PC-9 (cell line): ENCODE measurements at regions of chr3 and their contacts with region 1.

Region 1: DNA sequence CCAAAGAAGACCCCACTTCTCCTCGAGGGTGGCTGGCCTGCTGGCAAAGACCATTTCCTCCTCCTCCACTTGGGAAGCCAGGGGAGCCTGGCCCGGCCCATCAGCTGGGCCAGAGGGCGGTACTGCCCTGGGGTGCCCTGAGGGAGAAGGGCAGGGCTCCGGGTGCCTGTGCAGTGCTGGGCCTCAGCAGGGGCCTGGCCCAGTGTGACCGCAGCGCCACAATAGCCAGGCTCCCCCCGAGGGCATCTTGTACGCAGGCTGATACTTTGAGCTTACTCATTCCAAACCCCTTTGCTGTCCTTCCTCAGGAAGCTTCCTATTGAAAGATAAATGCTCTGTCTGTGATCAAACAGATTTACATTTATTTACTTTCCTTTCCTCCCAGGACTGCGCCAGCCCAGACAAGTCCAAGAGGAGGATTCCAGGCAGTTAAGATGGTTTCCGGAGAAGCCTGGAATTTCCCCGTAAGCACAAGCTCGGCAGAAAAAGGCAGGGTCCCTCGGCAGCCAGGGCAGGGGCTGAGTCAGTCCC is 240.1 kb downstream of the XXYLT1 start:
- DNase-seq: peak; percentile 98
- H3K4me3 ChIP-seq: peak overlapping the region; percentile 28; the same call in 1 of the 2 replicates
- H3K27ac ChIP-seq: peak overlapping the region; percentile 83
- H3K4me1 ChIP-seq: peaks cover 53% of the 10 kb centered on the region
- H3K27me3 ChIP-seq: no peaks in the 10 kb centered on the region
- CTCF ChIP-seq: no peak

Region 2: DNA sequence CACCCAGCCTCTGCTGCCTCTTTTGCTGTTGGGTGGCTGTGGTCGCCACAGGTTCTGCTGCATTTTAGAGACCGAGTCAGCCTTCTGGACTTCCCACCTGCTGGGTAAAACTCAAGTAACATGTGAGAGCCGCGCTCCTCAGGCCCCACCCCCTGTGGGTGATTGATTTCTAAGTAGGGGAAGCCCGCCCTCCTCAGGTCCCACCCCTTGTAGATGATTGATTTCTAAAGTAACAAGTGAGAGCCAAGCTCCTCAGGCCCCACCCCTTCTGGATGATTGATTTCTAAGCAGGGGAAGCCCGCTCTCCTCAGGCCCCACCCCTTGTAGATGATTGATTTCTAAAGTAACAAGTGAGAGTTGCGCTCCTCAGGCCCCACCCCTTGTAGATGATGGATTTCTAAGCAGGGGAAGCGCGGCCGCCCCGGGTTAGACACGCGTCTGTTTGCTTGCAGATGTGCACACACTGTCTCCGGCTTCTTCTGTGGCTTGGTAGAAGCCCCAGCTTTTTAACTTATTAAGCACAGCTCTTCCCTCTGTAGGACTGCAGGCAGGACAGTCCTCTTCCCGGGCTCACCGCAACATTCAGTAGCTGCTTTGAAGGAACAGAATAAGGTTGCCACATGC is 261.7 kb before region 1 on chr3:
- CTCF ChIA-PET with region 1: no interaction called
- POLR2A ChIA-PET with region 1: interaction called, 16 read pairs
- intact Hi-C with region 1: no loop called
- DNase-seq: peak; percentile 96 to 97
- H3K4me3 ChIP-seq: peak overlapping the region; percentile 50; the same call in 1 of the 2 replicates
- H3K27ac ChIP-seq: no peak overlapping the region
- H3K4me1 ChIP-seq: peaks cover 26% of the 10 kb centered on the region
- H3K27me3 ChIP-seq: no peaks in the 10 kb centered on the region
- CTCF ChIP-seq: 0 out of 2 replicates have a peak, but pooled peaks have one; percentile 28

Region 3: DNA sequence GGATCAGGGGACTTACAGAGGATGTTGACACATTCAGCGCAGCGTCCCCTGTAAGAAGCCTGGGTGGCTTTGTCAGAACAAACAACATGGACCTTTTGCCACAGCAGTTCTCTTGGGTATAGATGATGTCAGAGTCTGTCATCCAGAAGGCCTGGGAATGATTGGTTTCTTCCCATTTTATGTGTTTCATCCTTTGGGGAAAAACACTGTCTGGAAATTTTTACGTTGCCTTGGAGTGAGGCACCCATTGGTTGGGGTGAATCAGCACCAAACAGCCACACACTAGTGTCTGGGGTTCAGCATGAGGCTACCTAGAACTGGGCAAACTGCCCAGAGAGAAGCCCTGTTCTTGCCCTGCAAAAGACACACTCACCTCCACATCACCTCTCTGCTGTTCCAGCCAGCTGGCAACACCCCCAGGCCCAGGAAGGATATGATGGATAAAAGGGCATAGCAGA is 222.2 kb before region 1 on chr3:
- CTCF ChIA-PET with region 1: no interaction called
- POLR2A ChIA-PET with region 1: no interaction called
- intact Hi-C with region 1: no loop called
- DNase-seq: peak in 1 of 2 experiments; percentile 27
- H3K4me3 ChIP-seq: no peak overlapping the region
- H3K27ac ChIP-seq: no peak overlapping the region
- H3K4me1 ChIP-seq: 0 out of 2 replicates have a peak, but pooled peaks cover 5% of the 10 kb centered on the region
- H3K27me3 ChIP-seq: 0 out of 2 replicates have a peak, but pooled peaks cover 13% of the 10 kb centered on the region
- CTCF ChIP-seq: no peak

Region 4: GRCh38 chr3:195001961-195002861 is 28.6 kb before region 1 on chr3:
- CTCF ChIA-PET with region 1: no interaction called
- POLR2A ChIA-PET with region 1: no interaction called
- intact Hi-C with region 1: loop called (anchors 1 kb)
- DNase-seq: peak; percentile 90 to 92
- H3K4me3 ChIP-seq: no peak overlapping the region
- H3K27ac ChIP-seq: no peak overlapping the region
- H3K4me1 ChIP-seq: peaks cover 25% of the 10 kb centered on the region
- H3K27me3 ChIP-seq: no peaks in the 10 kb centered on the region
- CTCF ChIP-seq: peak; percentile 85

Region 5: DNA sequence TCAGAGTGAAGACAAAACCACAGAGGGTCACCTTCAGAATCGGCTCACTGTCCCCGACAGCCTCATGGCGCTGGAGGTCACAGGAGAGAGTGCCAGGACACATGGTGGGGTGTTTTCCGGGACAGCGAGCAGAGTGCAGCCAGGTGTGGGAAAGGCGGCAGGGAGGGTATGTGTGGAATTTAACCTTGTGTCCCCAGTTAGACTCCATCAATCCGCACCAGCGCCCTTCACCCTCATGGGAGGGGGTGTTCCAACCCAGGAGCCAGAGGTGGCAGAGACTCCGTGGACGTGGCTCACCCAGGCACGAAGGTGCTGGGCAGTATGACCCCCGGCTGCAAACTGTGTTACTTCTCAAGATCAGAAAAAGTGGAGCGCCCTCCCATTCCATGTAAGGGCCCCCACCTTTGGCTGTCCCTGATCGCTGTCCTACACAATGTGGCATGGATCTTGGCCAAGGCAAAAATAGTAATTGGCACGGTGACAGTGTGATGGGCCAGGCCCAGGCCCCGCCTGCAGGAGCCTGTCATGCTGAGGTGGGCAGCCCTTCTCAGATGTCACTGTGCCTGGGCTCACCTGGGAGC is 49.8 kb after region 1 on chr3:
- CTCF ChIA-PET with region 1: no interaction called
- POLR2A ChIA-PET with region 1: interaction called, 12 read pairs
- intact Hi-C with region 1: no loop called
- DNase-seq: no peak
- H3K4me3 ChIP-seq: no peak overlapping the region
- H3K27ac ChIP-seq: no peak overlapping the region
- H3K4me1 ChIP-seq: no peaks in the 10 kb centered on the region
- H3K27me3 ChIP-seq: no peaks in the 10 kb centered on the region
- CTCF ChIP-seq: no peak

Region 6: GRCh38 chr3:195187609-195188425 is 157.0 kb after region 1 on chr3:
- CTCF ChIA-PET with region 1: no interaction called
- POLR2A ChIA-PET with region 1: no interaction called
- intact Hi-C with region 1: loop called (anchors 5 kb)
- DNase-seq: no peak
- H3K4me3 ChIP-seq: no peak overlapping the region
- H3K27ac ChIP-seq: no peak overlapping the region
- H3K4me1 ChIP-seq: peaks cover 23% of the 10 kb centered on the region
- H3K27me3 ChIP-seq: no peaks in the 10 kb centered on the region
- CTCF ChIP-seq: no peak

Region 7: GRCh38 chr3:195259475-195260279 is 228.8 kb after region 1 on chr3:
- CTCF ChIA-PET with region 1: no interaction called
- POLR2A ChIA-PET with region 1: no interaction called
- intact Hi-C with region 1: loop called (anchors 1 kb)
- DNase-seq: peak; percentile 86 to 96
- H3K4me3 ChIP-seq: peak overlapping the region; percentile 70
- H3K27ac ChIP-seq: peak overlapping the region; percentile 74
- H3K4me1 ChIP-seq: peaks cover 13% of the 10 kb centered on the region
- H3K27me3 ChIP-seq: no peaks in the 10 kb centered on the region
- CTCF ChIP-seq: no peak

Region 8: GRCh38 chr3:195319060-195319459 is 288.2 kb after region 1 on chr3:
- CTCF ChIA-PET with region 1: no interaction called
- POLR2A ChIA-PET with region 1: no interaction called
- intact Hi-C with region 1: no loop called
- DNase-seq: no peak
- H3K4me3 ChIP-seq: no peak overlapping the region
- H3K27ac ChIP-seq: no peak overlapping the region
- H3K4me1 ChIP-seq: no peaks in the 10 kb centered on the region
- H3K27me3 ChIP-seq: no peaks in the 10 kb centered on the region
- CTCF ChIP-seq: no peak